ENCODE measurements at regions of chr2 and their contacts with region 1.

Region 1: GRCh38 chr2:30115141-30115980 is 31.4 kb upstream of the YPEL5 start:
- DNase-seq: peak; percentile 38 to 91
- H3K4me3 ChIP-seq: no peak overlapping the region
- H3K27ac ChIP-seq: no peak overlapping the region
- H3K4me1 ChIP-seq: peaks cover 0 to 8% of the 10 kb centered on the region in 2 donors
- H3K27me3 ChIP-seq: no peaks in the 10 kb centered on the region
- CTCF ChIP-seq: peak; percentile 89 to 95 (median 92)

Region 2: DNA sequence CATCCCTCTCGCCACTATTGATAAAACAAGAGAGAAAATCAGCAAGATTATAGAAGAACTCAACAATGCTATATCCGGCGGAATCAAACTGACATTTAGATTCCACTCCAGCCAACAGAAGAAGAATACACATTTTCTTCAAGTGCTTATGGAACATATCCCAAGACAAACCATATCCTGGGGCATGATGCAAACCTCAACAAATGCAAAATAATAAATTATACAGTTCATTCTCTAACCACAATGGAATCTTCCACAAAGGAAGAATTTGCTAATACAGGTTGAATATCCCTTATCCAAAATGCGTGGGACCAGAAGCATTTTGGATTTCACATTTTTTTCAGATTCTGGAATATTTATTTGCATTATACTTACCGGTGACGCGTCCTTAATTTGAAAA is 20.0 kb before region 1 on chr2:
- intact Hi-C with region 1: loop called (anchors 1 kb)
- DNase-seq: no peak
- H3K4me3 ChIP-seq: no peak overlapping the region
- H3K27ac ChIP-seq: no peak overlapping the region
- H3K4me1 ChIP-seq: no peaks in the 10 kb centered on the region
- H3K27me3 ChIP-seq: no peaks in the 10 kb centered on the region
- CTCF ChIP-seq: no peak

Measured in ascending aorta (tissue), 2 donors.